SK-N-SH (cell line): ENCODE measurements at regions of chr2 and their contacts with region 1.

Region 1: GRCh38 chr2:200509612-200510433 is at the start of gene KCTD18:
- DNase-seq: peak; percentile 98
- H3K4me3 ChIP-seq: peak within 1 kb of the TSS; percentile 69 to 92
- H3K27ac ChIP-seq: peak within 1 kb of the TSS; percentile 49 to 78
- H3K4me1 ChIP-seq: peaks cover 5 to 11% of the 10 kb centered on the region in 2 experiments; a peak in 2 of 4 replicates
- H3K27me3 ChIP-seq: no peaks in the 10 kb centered on the region
- CTCF ChIP-seq: peak; percentile 75
- EP300 ChIP-seq: no peak; a peak in 2 of 4 replicates
- RAD21 ChIP-seq: peak; percentile 56
- polyA plus RNA-seq, gene KCTD18: 7.1 and 8.0 TPM in 2 replicates

Region 2: DNA sequence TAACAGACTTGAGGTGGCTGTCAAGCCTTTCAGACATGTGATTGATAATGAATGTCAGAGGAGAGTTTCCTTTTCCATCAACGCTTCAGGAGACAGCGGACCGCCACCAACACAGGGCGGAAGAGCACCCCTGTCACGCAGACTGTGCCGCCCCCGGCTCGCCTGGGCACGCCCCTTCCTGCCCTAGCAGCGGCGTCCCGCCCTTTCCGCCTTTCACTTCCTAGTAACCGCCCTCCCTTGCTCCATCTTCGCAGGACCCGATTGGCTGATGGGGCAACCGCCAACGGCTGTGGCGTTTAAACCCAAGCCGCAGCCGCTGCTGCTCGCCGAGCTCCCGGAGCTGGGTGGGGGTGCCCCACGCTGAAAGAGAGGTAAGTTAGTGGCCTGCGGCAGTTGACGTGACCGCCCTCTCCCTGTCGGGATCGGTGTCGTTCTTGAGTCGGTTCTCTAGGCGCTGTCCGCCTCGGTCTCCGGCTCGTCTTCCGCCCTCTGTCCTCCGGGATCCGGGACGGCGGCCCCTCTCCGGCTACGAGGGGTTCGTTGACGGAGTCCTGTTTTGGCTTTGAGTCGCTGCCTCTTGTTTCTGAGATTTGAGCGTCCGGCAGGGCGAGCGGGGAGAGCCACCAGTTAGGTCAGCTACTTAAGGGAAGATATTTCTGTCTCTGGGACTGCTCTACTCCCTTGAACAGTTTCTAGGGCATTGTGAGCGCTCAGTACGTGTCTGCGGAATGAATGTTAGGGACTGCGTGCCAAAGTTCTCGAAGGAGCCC is 16.2 kb after region 1 on chr2 and contains the start of gene SGO2:
- CTCF ChIA-PET with region 1: interaction called, 16 read pairs
- POLR2A ChIA-PET with region 1: no interaction called
- DNase-seq: peak; percentile 96
- H3K4me3 ChIP-seq: peak within 1 kb of the TSS; percentile 92 to 96
- H3K27ac ChIP-seq: peak within 1 kb of the TSS; percentile 41 to 72
- H3K4me1 ChIP-seq: peaks cover 11 to 13% of the 10 kb centered on the region in 2 experiments; a peak in 3 of 4 replicates
- H3K27me3 ChIP-seq: no peaks in the 10 kb centered on the region; the same call in 1 of the 2 replicates
- CTCF ChIP-seq: 0 out of 2 replicates have a peak, but pooled peaks have one; percentile 12
- EP300 ChIP-seq: peak in 1 of 2 experiments; percentile 36; a peak in 1 of 4 replicates
- RAD21 ChIP-seq: no peak
- polyA plus RNA-seq, gene SGO2: 2.8 TPM in 2 replicates